OCI-LY7 (cell line): ENCODE measurements at regions of chr6 and their contacts with region 1.

Region 1: GRCh38 chr6:152982768-152983636 is at the start of gene FBXO5:
- DNase-seq: peak; percentile 98
- H3K4me3 ChIP-seq: peak within 1 kb of the TSS; percentile 98
- H3K27ac ChIP-seq: peak within 1 kb of the TSS; percentile 87
- H3K4me1 ChIP-seq: peaks cover 44% of the 10 kb centered on the region
- CTCF ChIP-seq: no peak
- total RNA-seq, gene FBXO5: 47.8 and 53.2 TPM in 2 replicates

Region 2: GRCh38 chr6:151390276-151391032 is 1592.5 kb before region 1 on chr6:
- CTCF ChIA-PET with region 1: no interaction called
- POLR2A ChIA-PET with region 1: no interaction called
- intact Hi-C with region 1: loop called (anchors 5 kb)
- DNase-seq: peak; percentile 99
- H3K4me3 ChIP-seq: peak overlapping the region; percentile 99
- H3K27ac ChIP-seq: peak overlapping the region; percentile 97
- H3K4me1 ChIP-seq: peaks cover 55% of the 10 kb centered on the region
- CTCF ChIP-seq: no peak

Region 3: GRCh38 chr6:152680879-152681517 is 302.0 kb before region 1 on chr6:
- CTCF ChIA-PET with region 1: no interaction called
- POLR2A ChIA-PET with region 1: interaction called, 7 read pairs
- intact Hi-C with region 1: loop called (anchors 2 kb)
- DNase-seq: no peak
- H3K4me3 ChIP-seq: peak overlapping the region; percentile 70
- H3K27ac ChIP-seq: peak overlapping the region; percentile 96
- H3K4me1 ChIP-seq: peaks cover 66% of the 10 kb centered on the region
- CTCF ChIP-seq: no peak

Region 4: GRCh38 chr6:153002607-153003365 is 19.8 kb after region 1 on chr6 and contains the start of gene MTRF1L:
- CTCF ChIA-PET with region 1: interaction called, 3 read pairs
- POLR2A ChIA-PET with region 1: interaction called, 40 read pairs
- intact Hi-C with region 1: loop called (anchors 2 kb)
- DNase-seq: peak; percentile 96
- H3K4me3 ChIP-seq: peak within 1 kb of the TSS; percentile 75
- H3K27ac ChIP-seq: peak within 1 kb of the TSS; percentile 57
- H3K4me1 ChIP-seq: peaks cover 22% of the 10 kb centered on the region
- CTCF ChIP-seq: no peak
- total RNA-seq, gene MTRF1L: 10.4 and 11.0 TPM in 2 replicates

Region 5: DNA sequence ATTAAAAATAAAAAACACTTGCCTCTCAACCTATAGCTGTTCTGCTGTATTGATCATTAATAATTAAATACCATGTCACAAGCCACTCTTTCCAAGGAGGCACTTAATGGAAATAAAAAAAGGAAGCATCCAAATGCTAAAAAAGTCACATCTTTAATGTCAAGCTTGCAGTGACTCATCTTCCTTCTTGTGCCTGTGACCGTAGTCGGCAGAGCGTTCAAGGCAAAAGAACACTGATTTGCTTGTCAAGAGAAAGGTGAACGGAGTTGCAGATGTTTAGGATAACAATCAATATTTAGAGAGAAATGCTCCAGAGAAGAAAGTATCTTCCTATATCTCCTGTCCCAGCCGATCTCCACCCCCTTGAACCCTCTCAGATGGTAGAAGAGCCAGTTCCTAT is 715.0 kb after region 1 on chr6:
- CTCF ChIA-PET with region 1: no interaction called
- POLR2A ChIA-PET with region 1: no interaction called
- intact Hi-C with region 1: no loop called
- DNase-seq: no peak
- H3K4me3 ChIP-seq: no peak overlapping the region
- H3K27ac ChIP-seq: no peak overlapping the region
- H3K4me1 ChIP-seq: no peaks in the 10 kb centered on the region
- CTCF ChIP-seq: no peak